Esophagus squamous epithelium (tissue), 5 donors: ENCODE measurements at regions of chr1 and their contacts with region 1.

Region 1: GRCh38 chr1:62175568-62176179 is 19.0 kb upstream of the L1TD1 start:
- DNase-seq: no peak
- H3K4me3 ChIP-seq: no peak overlapping the region
- H3K27ac ChIP-seq: no peak overlapping the region
- H3K4me1 ChIP-seq: peaks cover 0 to 11% (median 6%) of the 10 kb centered on the region in 3 donors
- H3K27me3 ChIP-seq: peaks cover 0 to 20% (median 0%) of the 10 kb centered on the region in 4 donors
- CTCF ChIP-seq: peak in 5 of 6 experiments; percentile 61 to 78 (median 66)
- POLR2A ChIP-seq: no peak

Region 2: DNA sequence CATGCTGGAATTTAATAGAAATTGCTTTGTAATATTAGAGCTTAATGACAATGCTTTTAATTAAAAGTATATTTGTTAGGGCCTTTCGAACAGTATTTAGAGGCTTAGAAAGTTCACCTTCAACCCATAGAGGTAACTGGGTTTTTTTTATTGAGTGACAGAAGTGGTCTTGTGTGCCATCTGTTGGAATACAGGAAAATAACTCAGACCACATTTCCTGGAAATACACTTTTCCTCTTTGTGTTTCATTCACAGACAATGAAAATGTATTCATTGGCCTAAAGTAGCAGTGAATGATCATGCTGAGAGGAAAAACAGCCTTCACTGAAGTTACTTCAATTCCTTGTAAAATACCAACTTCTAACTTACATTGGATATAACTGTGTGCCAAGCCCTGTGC is 64.6 kb before region 1 on chr1:
- intact Hi-C with region 1: no loop called
- DNase-seq: no peak
- H3K4me3 ChIP-seq: no peak overlapping the region
- H3K27ac ChIP-seq: no peak overlapping the region
- H3K4me1 ChIP-seq: no peaks in the 10 kb centered on the region
- H3K27me3 ChIP-seq: no peaks in the 10 kb centered on the region
- CTCF ChIP-seq: no peak
- POLR2A ChIP-seq: no peak

Region 3: GRCh38 chr1:62407405-62408009 is 231.8 kb after region 1 on chr1:
- intact Hi-C with region 1: loop called (anchors 2 kb)
- DNase-seq: no peak
- H3K4me3 ChIP-seq: no peak overlapping the region
- H3K27ac ChIP-seq: no peak overlapping the region
- H3K4me1 ChIP-seq: no peaks in the 10 kb centered on the region
- H3K27me3 ChIP-seq: no peaks in the 10 kb centered on the region
- CTCF ChIP-seq: peak; percentile 48 to 80 (median 66)
- POLR2A ChIP-seq: no peak